Activated T-helper 2 cell treated with anti-CD3 and anti-CD28 coated beads, Interferon-gamma antibody, Interleukin-2, Interleukin-4, amounts not matched to agents 10 μg/mL and 5 μg/mL and 100 μg/mL, durations not matched to agents 14 hours and 24 hours and 36 hours (primary cell): ENCODE measurements at regions of chr22 and their contacts with region 1.

Region 1: GRCh38 chr22:23178512-23179254 is 1.6 kb upstream of the BCR start:
- DNase-seq: peak; percentile 40
- H3K4me3 Mint-ChIP-seq: peak overlapping the region; percentile 43
- H3K27ac Mint-ChIP-seq: peak overlapping the region; percentile 39
- H3K4me1 Mint-ChIP-seq: peaks cover 41% of the 10 kb centered on the region
- H3K27me3 Mint-ChIP-seq: no peaks in the 10 kb centered on the region

Region 2: DNA sequence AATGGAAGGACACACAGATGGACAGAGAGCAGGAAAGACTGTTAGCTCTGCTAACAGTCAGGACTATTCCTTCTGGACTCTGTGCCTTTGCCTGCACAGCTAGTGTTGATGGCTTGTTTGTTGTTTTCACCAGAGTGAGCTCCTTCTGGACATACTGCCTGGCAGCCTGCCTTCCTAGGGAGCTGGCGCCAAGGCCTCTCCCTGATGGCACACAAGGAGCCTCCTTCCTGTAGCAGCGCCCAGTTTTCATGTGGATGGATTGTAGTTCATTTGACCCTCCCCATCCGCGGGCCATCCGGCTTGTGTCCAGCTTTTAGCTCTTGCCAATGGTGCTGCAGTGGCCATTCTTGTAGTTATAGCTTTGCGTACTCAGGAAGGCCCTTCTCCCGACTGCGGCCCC is 15.0 kb before region 1 on chr22:
- intact Hi-C with region 1: no loop called
- DNase-seq: no peak
- H3K4me3 Mint-ChIP-seq: no peak overlapping the region
- H3K27ac Mint-ChIP-seq: no peak overlapping the region
- H3K4me1 Mint-ChIP-seq: no peaks in the 10 kb centered on the region
- H3K27me3 Mint-ChIP-seq: no peaks in the 10 kb centered on the region

Region 3: GRCh38 chr22:23219822-23220484 is 41.3 kb after region 1 on chr22:
- intact Hi-C with region 1: loop called (anchors 1 kb)
- DNase-seq: peak; percentile 40
- H3K4me3 Mint-ChIP-seq: peak overlapping the region; percentile 70
- H3K27ac Mint-ChIP-seq: peak overlapping the region; percentile 86
- H3K4me1 Mint-ChIP-seq: peaks cover 80% of the 10 kb centered on the region
- H3K27me3 Mint-ChIP-seq: no peaks in the 10 kb centered on the region

Region 4: DNA sequence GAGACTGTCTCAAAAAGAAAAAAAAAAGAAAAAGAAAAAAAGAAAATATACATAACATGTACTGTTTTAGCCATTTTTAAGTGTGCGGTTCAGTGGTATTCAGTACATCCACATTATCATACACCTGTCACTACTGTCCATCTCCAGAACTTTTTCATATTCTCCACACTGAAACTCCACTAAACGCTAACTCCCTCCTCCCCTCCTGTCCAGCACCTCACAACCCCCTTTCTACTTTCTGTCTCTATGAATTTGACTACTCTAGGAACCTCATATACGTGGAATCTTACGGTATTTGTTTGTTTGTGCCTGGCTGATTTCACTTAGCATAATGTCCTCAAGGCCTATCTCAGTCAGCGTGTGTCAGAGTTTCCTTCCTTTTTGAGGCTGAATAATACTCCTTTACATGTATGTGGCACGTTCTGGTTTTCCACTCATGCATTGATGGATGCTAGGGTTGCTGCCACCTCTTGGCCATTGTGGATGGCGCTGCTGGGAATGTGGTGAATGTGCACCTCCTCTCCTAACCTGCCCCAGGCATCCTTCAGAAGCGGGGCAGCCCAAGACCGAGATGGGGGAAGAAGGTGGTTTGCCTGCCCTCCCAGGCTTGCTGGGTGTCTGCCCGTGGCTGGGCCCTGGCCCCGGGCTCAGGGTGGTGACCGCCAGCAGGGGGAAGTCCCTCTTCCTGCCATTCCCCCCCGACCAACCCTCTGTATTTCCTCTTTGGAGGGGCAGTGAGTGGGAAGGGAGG is 62.1 kb after region 1 on chr22:
- intact Hi-C with region 1: loop called (anchors 1 kb)
- DNase-seq: no peak
- H3K4me3 Mint-ChIP-seq: no peak overlapping the region
- H3K27ac Mint-ChIP-seq: peak overlapping the region; percentile 58
- H3K4me1 Mint-ChIP-seq: peaks cover 47% of the 10 kb centered on the region
- H3K27me3 Mint-ChIP-seq: no peaks in the 10 kb centered on the region

Region 5: GRCh38 chr22:23281406-23282088 is 102.9 kb after region 1 on chr22:
- intact Hi-C with region 1: loop called (anchors 1 kb)
- DNase-seq: peak; percentile 65
- H3K4me3 Mint-ChIP-seq: no peak overlapping the region
- H3K27ac Mint-ChIP-seq: no peak overlapping the region
- H3K4me1 Mint-ChIP-seq: no peaks in the 10 kb centered on the region
- H3K27me3 Mint-ChIP-seq: no peaks in the 10 kb centered on the region

Region 6: DNA sequence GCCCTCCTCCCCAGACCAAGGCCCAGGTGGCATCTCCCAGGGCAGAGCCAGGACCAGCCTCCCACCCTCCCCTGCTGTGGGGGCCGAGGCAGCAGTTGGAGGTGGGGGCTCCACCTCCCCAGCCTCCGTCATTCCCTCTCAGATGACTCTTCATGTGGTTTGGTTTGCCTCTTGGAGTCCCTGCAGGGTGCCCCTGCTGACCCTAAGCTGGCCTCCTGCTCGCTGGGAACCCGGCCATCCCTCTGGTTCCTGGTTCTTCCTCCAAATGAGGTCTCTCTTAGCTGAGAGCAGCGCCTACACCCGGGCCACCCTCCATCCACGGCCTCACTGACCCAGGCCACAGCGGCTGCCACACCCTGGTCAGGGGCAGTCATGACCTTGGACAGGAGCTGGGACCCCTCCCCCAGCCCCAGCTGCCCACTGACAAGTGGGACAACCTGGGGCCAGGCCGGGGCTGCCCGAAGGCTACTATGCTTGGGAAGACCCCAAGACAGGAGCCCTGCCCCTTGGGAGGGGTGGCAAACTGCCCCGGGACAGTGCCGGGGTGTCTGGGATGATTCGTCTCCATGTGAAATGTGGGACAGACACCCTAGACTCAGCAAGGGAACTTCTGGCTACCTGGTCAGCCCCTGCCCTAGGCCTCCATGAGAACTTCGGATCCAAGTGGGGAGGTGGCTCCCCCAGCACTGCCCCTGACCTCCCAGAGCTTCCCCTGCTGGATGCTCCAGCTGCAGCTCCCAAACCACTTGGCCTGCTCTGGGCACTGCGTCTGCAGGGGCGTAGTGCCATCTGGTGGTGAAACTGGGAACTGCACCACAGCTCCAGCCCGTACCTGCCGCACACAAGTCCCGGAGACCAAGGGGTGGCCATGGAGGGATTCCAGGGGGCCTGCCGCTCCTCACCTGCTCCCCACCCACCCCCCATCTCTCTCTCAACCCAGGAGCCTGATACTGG is 206.9 kb after region 1 on chr22:
- intact Hi-C with region 1: loop called (anchors 5 kb)
- DNase-seq: peak; percentile 69
- H3K4me3 Mint-ChIP-seq: no peak overlapping the region
- H3K27ac Mint-ChIP-seq: no peak overlapping the region
- H3K4me1 Mint-ChIP-seq: no peaks in the 10 kb centered on the region
- H3K27me3 Mint-ChIP-seq: no peaks in the 10 kb centered on the region

Region 7: GRCh38 chr22:23709107-23709506 is 530.4 kb after region 1 on chr22:
- intact Hi-C with region 1: loop called (anchors 5 kb)
- DNase-seq: no peak
- H3K4me3 Mint-ChIP-seq: no peak overlapping the region
- H3K27ac Mint-ChIP-seq: peak overlapping the region; percentile 65
- H3K4me1 Mint-ChIP-seq: peaks cover 64% of the 10 kb centered on the region
- H3K27me3 Mint-ChIP-seq: no peaks in the 10 kb centered on the region